ENCODE measurements at regions of chr7 and their contacts with region 1.

Region 1: DNA sequence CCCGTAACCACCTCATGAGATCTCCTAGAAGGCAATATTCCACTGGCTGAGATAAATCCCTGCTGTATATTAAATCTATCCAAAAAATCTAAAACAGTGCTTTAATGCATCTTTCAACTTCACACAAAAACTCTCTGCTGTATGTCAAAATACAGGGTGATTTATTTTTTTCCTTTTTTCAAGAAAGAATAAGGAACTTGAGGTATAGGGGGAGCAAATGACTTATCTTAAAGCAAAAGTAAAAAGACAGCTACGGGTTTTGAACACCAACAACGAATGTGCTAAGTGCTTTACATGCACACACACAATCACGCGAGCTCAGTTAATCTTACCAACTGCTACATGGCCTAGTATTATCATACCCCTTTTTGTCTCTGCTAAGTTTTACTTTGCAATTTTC is 168.9 kb upstream of the PHF14 start:
- DNase-seq: no peak
- ATAC-seq: no peak
- H3K4me3 ChIP-seq: no peak overlapping the region
- H3K4me3 Mint-ChIP-seq: no peak overlapping the region
- H3K27ac ChIP-seq: no peak overlapping the region
- H3K27ac Mint-ChIP-seq: no peak overlapping the region
- H3K4me1 ChIP-seq: no peaks in the 10 kb centered on the region
- H3K4me1 Mint-ChIP-seq: no peaks in the 10 kb centered on the region
- H3K27me3 ChIP-seq: no peaks in the 10 kb centered on the region
- H3K27me3 Mint-ChIP-seq: no peaks in the 10 kb centered on the region
- CTCF ChIP-seq: no peak

Region 2: DNA sequence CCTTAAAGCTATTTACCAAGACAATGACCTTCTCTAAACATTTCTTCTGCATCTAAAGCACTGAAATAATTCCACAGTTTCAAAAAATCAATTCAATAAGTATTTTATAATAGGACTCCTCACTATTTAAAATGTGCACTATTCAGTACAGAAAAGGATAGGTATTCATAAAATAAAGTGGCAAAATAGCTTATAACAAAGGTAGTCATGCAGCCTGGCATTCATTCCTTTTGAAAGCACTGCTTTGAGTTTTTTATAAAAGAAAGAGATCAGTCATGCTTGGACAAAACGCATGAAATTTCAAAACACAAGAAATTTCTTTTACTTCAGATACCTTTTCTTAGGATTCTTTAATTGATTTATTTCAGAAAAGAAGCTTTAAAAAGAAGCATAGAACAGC is 520.8 kb before region 1 on chr7:
- CTCF ChIA-PET with region 1: no interaction called
- POLR2A ChIA-PET with region 1: no interaction called
- intact Hi-C with region 1: loop called in 1 of 2 experiments (anchors 5 kb)
- DNase-seq: no peak
- ATAC-seq: no peak
- H3K4me3 ChIP-seq: no peak overlapping the region
- H3K4me3 Mint-ChIP-seq: no peak overlapping the region
- H3K27ac ChIP-seq: no peak overlapping the region
- H3K27ac Mint-ChIP-seq: no peak overlapping the region
- H3K4me1 ChIP-seq: no peaks in the 10 kb centered on the region
- H3K4me1 Mint-ChIP-seq: no peaks in the 10 kb centered on the region
- H3K27me3 ChIP-seq: no peaks in the 10 kb centered on the region
- H3K27me3 Mint-ChIP-seq: no peaks in the 10 kb centered on the region
- CTCF ChIP-seq: no peak

Region 3: DNA sequence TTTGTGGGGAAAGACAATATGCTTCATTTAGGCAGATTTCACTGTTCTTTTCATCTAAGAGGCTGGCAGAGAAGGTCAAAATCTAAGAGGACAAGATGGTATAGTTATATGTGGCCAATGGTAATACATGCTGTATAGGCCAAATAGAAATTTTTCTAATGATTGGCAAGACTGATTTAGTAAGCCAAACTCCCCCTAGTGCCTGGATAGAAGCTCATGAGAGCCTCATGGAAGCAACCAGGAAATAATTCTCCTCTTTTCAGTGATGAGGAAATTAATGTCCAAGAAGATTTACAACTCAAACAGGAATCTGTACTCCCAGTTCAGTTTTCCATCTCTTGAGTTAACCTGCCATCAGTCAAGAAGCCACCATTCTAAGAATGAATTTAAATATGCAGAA is 84.7 kb before region 1 on chr7:
- CTCF ChIA-PET with region 1: no interaction called
- POLR2A ChIA-PET with region 1: no interaction called
- intact Hi-C with region 1: no loop called
- DNase-seq: no peak
- ATAC-seq: no peak
- H3K4me3 ChIP-seq: no peak overlapping the region
- H3K4me3 Mint-ChIP-seq: no peak overlapping the region
- H3K27ac ChIP-seq: no peak overlapping the region
- H3K27ac Mint-ChIP-seq: no peak overlapping the region
- H3K4me1 ChIP-seq: no peaks in the 10 kb centered on the region
- H3K4me1 Mint-ChIP-seq: no peaks in the 10 kb centered on the region
- H3K27me3 ChIP-seq: no peaks in the 10 kb centered on the region
- H3K27me3 Mint-ChIP-seq: no peaks in the 10 kb centered on the region
- CTCF ChIP-seq: no peak

Region 4: GRCh38 chr7:11946794-11947193 is 1142.0 kb after region 1 on chr7:
- CTCF ChIA-PET with region 1: no interaction called
- POLR2A ChIA-PET with region 1: no interaction called
- intact Hi-C with region 1: no loop called
- DNase-seq: no peak
- ATAC-seq: no peak
- H3K4me3 ChIP-seq: no peak overlapping the region
- H3K4me3 Mint-ChIP-seq: no peak overlapping the region
- H3K27ac ChIP-seq: no peak overlapping the region
- H3K27ac Mint-ChIP-seq: no peak overlapping the region
- H3K4me1 ChIP-seq: no peaks in the 10 kb centered on the region
- H3K4me1 Mint-ChIP-seq: no peaks in the 10 kb centered on the region
- H3K27me3 ChIP-seq: no peaks in the 10 kb centered on the region
- H3K27me3 Mint-ChIP-seq: no peaks in the 10 kb centered on the region
- CTCF ChIP-seq: no peak

Measured in CD8-positive, alpha-beta T cell (primary cell).